Naive thymus-derived CD4-positive, alpha-beta T cell (primary cell): ENCODE measurements at regions of chr12 and their contacts with region 1.

Region 1: DNA sequence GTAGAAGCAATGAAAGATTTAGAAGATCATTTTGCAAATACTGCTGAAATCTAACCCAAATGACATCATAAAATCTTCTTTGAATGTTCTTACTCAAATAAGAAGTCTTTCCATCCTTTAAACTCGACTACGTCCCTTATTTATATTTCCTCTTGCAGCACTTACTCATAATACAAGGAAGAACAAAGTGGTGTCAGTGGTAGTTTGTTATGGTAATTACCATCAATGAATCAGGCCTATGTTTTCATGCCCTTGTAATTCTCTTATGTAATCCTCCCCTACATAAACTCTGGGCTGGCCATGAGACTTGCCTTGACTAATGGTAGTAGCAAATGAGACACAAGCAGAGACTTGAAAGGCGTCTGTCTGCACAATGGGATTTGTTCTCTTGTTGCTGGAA is 17.0 kb downstream of the EEA1 start:
- DNase-seq: peak in 1 of 9 donors; percentile 28
- ATAC-seq: peak; percentile 74
- H3K4me3 ChIP-seq: no peak overlapping the region
- H3K4me3 Mint-ChIP-seq: peak overlapping the region; percentile 20 to 68 (median 56)
- H3K27ac ChIP-seq: peak overlapping the region; percentile 30
- H3K27ac Mint-ChIP-seq: peak overlapping the region; percentile 58 to 96 (median 85)
- H3K4me1 ChIP-seq: peaks cover 6 to 33% of the 10 kb centered on the region in 2 donors
- H3K4me1 Mint-ChIP-seq: peaks cover 36 to 76% (median 61%) of the 10 kb centered on the region in 7 donors
- H3K27me3 ChIP-seq: no peaks in the 10 kb centered on the region
- H3K27me3 Mint-ChIP-seq: no peaks in the 10 kb centered on the region

Region 2: GRCh38 chr12:92739113-92739512 is 172.9 kb before region 1 on chr12:
- CTCF ChIA-PET with region 1: no interaction called
- POLR2A ChIA-PET with region 1: no interaction called
- intact Hi-C with region 1: no loop called
- DNase-seq: no peak
- ATAC-seq: no peak
- H3K4me3 ChIP-seq: no peak overlapping the region
- H3K4me3 Mint-ChIP-seq: no peak overlapping the region
- H3K27ac ChIP-seq: no peak overlapping the region
- H3K27ac Mint-ChIP-seq: no peak overlapping the region
- H3K4me1 ChIP-seq: no peaks in the 10 kb centered on the region
- H3K4me1 Mint-ChIP-seq: peaks cover 0 to 42% (median 18%) of the 10 kb centered on the region in 7 donors
- H3K27me3 ChIP-seq: no peaks in the 10 kb centered on the region
- H3K27me3 Mint-ChIP-seq: peaks cover 0 to 17% (median 8%) of the 10 kb centered on the region in 5 donors

Region 3: GRCh38 chr12:92899388-92900001 is 12.6 kb before region 1 on chr12:
- CTCF ChIA-PET with region 1: no interaction called
- POLR2A ChIA-PET with region 1: interaction called, 6 read pairs
- intact Hi-C with region 1: loop called in 1 of 2 experiments (anchors 2 kb)
- DNase-seq: no peak
- ATAC-seq: no peak
- H3K4me3 ChIP-seq: no peak overlapping the region
- H3K4me3 Mint-ChIP-seq: peak overlapping the region in 2 of 10 donors; percentile 12 to 21
- H3K27ac ChIP-seq: no peak overlapping the region
- H3K27ac Mint-ChIP-seq: peak overlapping the region in 6 of 9 donors; percentile 31 to 91 (median 74)
- H3K4me1 ChIP-seq: peaks cover 0 to 4% of the 10 kb centered on the region in 2 donors
- H3K4me1 Mint-ChIP-seq: peaks cover 14 to 62% (median 45%) of the 10 kb centered on the region in 7 donors
- H3K27me3 ChIP-seq: no peaks in the 10 kb centered on the region
- H3K27me3 Mint-ChIP-seq: no peaks in the 10 kb centered on the region